HEK293T (cell line): ENCODE measurements at regions of chr11 and their contacts with region 1.

Region 1: GRCh38 chr11:6468712-6469495 is 4.8 kb downstream of the TRIM3 start:
- DNase-seq: peak; percentile 87

Region 2: GRCh38 chr11:6371825-6372224 is 97.1 kb before region 1 on chr11:
- CTCF ChIA-PET with region 1: no interaction called
- POLR2A ChIA-PET with region 1: no interaction called
- DNase-seq: no peak

Region 3: GRCh38 chr11:6397156-6397555 is 71.7 kb before region 1 on chr11:
- CTCF ChIA-PET with region 1: no interaction called
- POLR2A ChIA-PET with region 1: no interaction called
- DNase-seq: no peak

Region 4: GRCh38 chr11:6481012-6481923 is 12.4 kb after region 1 on chr11 and contains the starts of genes ARFIP2 and TIMM10B:
- CTCF ChIA-PET with region 1: no interaction called
- POLR2A ChIA-PET with region 1: interaction called, 22 read pairs
- DNase-seq: peak; percentile 97

Region 5: DNA sequence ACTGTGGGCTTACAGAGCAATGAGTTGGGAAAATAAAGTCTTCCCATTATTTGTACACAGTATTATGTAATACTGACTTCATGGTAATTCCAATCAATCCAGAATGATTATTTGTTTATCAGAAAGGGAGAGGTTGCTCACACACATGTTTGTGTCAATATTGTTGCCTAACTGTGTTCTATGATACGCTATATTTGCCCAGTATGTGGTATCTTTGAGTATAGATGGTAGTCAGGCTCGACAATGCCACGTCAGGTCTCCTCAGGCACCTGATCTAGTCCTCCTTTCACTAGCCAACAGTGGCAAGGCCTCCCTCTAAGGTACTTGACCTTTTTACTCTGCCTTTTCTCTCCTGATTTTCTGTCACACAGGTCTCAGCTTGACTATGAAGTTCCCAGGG is 33.5 kb after region 1 on chr11:
- CTCF ChIA-PET with region 1: no interaction called
- POLR2A ChIA-PET with region 1: no interaction called
- DNase-seq: no peak